ENCODE measurements at regions of chr19 and their contacts with region 1.

Region 1: DNA sequence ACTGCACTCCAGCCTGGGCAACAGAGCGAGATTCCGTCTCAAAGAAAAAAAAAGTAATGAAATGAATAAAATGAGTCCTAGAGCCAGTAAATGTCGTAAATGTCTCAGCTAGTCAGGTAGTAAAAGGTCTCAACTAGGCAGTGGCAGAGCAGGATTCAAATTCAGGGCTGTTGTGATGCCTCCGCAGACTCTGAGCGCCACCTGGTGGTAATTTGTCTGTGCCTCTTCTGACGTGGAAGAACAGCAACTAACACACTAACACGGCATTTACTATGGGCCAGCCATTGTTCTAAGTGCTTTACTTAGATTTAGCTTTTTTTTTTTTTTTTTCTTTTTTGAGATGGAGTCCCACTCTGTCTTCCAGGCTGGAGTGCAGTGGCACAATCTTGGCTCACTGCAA is 30.2 kb downstream of the CYP2F1 start:
- DNase-seq: peak in 1 of 2 donors; percentile 88
- H3K4me3 ChIP-seq: no peak overlapping the region
- H3K27ac ChIP-seq: no peak overlapping the region
- H3K4me1 ChIP-seq: no peaks in the 10 kb centered on the region
- H3K27me3 ChIP-seq: no peaks in the 10 kb centered on the region
- CTCF ChIP-seq: peak; percentile 50 to 67 (median 57)

Region 2: GRCh38 chr19:41123716-41124294 is 20.6 kb before region 1 on chr19:
- intact Hi-C with region 1: loop called (anchors 1 kb)
- DNase-seq: no peak
- H3K4me3 ChIP-seq: no peak overlapping the region
- H3K27ac ChIP-seq: no peak overlapping the region
- H3K4me1 ChIP-seq: no peaks in the 10 kb centered on the region
- H3K27me3 ChIP-seq: no peaks in the 10 kb centered on the region
- CTCF ChIP-seq: no peak

Measured in ascending aorta (tissue), 2 donors.